CD4-positive, alpha-beta T cell (primary cell): ENCODE measurements at regions of chr13 and their contacts with region 1.

Region 1: GRCh38 chr13:40377783-40378182 is 288.7 kb downstream of the FOXO1 start:
- DNase-seq: no peak
- ATAC-seq: peak; percentile 46
- H3K4me3 ChIP-seq: no peak overlapping the region
- H3K4me3 Mint-ChIP-seq: no peak overlapping the region
- H3K27ac ChIP-seq: no peak overlapping the region
- H3K27ac Mint-ChIP-seq: no peak overlapping the region
- H3K4me1 ChIP-seq: peaks cover 16% of the 10 kb centered on the region
- H3K4me1 Mint-ChIP-seq: peaks cover 54% of the 10 kb centered on the region
- H3K27me3 ChIP-seq: no peaks in the 10 kb centered on the region
- H3K27me3 Mint-ChIP-seq: no peaks in the 10 kb centered on the region
- CTCF ChIP-seq: no peak

Region 2: GRCh38 chr13:40329657-40330485 is 47.9 kb before region 1 on chr13:
- CTCF ChIA-PET with region 1: no interaction called
- POLR2A ChIA-PET with region 1: no interaction called
- intact Hi-C with region 1: loop called in 1 of 2 experiments (anchors 10 kb)
- DNase-seq: no peak
- ATAC-seq: no peak
- H3K4me3 ChIP-seq: no peak overlapping the region
- H3K4me3 Mint-ChIP-seq: no peak overlapping the region
- H3K27ac ChIP-seq: no peak overlapping the region
- H3K27ac Mint-ChIP-seq: no peak overlapping the region
- H3K4me1 ChIP-seq: peaks cover 9% of the 10 kb centered on the region
- H3K4me1 Mint-ChIP-seq: peaks cover 47% of the 10 kb centered on the region
- H3K27me3 ChIP-seq: no peaks in the 10 kb centered on the region
- H3K27me3 Mint-ChIP-seq: no peaks in the 10 kb centered on the region
- CTCF ChIP-seq: no peak